ENCODE measurements at regions of chr3 and their contacts with region 1.

Region 1: DNA sequence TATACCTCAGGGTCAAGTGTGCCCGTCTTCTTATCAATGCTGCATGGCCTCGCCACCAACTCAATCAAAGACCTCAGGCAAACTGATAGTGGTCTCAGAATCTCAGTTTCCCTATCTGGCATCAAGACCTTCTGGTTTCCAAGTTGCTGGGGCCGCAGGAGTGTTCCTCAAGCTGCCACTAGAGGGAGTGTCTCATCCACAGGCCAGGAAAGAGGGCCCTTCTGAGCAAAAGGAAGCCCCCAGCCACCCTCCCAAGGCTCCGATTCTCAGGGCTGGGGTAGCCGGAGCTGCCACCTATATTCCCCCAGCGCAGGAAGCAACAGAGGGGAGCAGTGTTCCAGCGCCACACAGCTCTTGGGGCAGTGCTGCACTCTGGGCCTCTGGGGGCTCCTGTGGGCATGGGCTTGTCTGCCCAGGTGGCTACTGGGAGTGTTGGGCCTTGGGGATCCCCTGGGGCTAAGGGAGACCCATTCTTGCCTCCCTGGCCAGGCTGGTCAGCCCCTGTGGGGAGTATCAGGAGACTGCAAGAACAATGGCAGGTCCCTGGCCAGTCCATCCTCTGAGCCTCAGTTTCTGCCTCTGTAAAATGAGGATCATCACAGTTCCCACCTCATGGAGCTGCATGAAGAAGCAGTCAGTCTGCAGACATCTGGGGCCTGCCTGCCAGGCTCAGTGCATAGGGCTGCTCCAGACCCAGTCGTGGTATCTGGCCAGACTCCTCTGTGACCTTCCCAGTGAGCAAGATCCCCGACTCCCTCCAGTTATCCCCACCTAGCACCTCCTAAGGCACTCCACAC is 23.4 kb upstream of the SEC13 start:
- DNase-seq: peak; percentile 79
- ATAC-seq: peak; percentile 80
- H3K4me3 Mint-ChIP-seq: no peak overlapping the region
- H3K27ac Mint-ChIP-seq: no peak overlapping the region
- H3K4me1 Mint-ChIP-seq: no peaks in the 10 kb centered on the region
- H3K27me3 Mint-ChIP-seq: no peaks in the 10 kb centered on the region
- CTCF ChIP-seq: peak; percentile 87

Region 2: DNA sequence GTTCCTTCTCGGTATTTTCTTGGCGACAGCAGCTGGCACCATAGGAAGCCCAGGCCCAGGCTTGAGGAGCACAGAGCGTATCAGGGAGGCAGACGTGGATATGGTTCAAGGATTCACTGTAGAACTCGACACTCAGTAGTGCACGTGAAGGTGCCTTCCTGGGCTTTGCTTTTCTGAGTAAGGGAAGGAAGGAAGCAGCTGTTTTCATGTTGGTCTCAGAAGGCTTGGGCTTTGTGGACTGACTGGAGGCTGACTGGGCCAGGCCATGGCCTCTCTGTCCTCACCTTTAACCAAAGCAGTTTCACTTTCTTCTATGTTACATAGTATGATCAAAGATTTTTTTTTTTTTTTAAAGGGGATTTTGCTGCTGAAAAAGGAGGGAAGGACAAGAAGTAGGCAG is 44.7 kb before region 1 on chr3:
- CTCF ChIA-PET with region 1: no interaction called
- POLR2A ChIA-PET with region 1: no interaction called
- DNase-seq: no peak
- ATAC-seq: no peak
- H3K4me3 Mint-ChIP-seq: no peak overlapping the region
- H3K27ac Mint-ChIP-seq: no peak overlapping the region
- H3K4me1 Mint-ChIP-seq: no peaks in the 10 kb centered on the region
- H3K27me3 Mint-ChIP-seq: no peaks in the 10 kb centered on the region
- CTCF ChIP-seq: no peak

Region 3: DNA sequence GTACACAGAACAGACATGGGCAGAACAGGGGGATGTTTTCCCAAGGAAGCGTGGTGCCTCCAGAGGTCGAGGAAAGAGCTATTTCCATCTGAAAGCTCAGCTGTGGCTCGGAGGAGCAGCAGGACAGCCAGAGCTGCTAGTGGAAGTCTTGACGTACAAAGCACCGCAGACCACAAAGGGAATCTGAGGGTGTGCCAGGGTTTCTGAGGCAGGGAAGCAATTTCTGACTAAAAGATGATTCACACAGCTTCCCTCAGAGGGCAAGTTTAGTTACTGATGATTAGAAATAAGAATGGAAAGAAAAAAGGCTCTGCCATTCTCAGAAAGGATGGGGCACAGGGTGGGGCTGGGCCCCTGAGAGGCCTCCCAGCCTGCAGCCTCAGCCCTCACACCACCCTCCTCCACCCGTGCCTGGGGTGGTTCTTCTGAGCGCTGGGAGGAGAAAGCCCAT is 22.3 kb after region 1 on chr3:
- CTCF ChIA-PET with region 1: interaction called, 14 read pairs
- POLR2A ChIA-PET with region 1: no interaction called
- DNase-seq: no peak
- ATAC-seq: peak; percentile 84
- H3K4me3 Mint-ChIP-seq: no peak overlapping the region
- H3K27ac Mint-ChIP-seq: 0 out of 2 replicates have a peak overlapping the region, but pooled peaks have one; percentile 15
- H3K4me1 Mint-ChIP-seq: peaks cover 14% of the 10 kb centered on the region
- H3K27me3 Mint-ChIP-seq: peaks cover 2% of the 10 kb centered on the region; the same call in 1 of the 2 replicates
- CTCF ChIP-seq: no peak

Measured in WTC11 (cell line).